ENCODE measurements at regions of chr4 and their contacts with region 1.

Region 1: DNA sequence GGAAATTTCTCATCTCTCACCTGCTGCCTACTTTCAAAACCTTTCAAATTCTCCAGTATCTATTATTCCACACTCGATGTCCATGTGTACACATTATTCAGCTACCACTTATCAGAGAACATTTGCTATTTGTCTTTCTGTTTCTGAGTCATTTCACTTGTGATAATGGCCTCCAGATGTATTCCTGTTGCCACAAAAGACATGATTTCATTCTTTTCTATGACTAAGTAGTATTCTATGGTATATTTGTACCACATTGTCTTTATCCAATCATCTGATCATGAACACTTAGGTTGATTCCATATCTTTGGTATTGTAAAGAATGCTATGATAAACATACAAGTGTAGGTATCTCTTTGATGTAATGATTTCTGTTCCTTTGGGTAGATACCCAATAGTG is 310.1 kb upstream of the SPOCK3 start:
- DNase-seq: no peak
- H3K4me3 ChIP-seq: no peak overlapping the region
- CTCF ChIP-seq: no peak
- POLR2A ChIP-seq: no peak

Region 2: GRCh38 chr4:167973513-167973912 is 429.1 kb after region 1 on chr4:
- intact Hi-C with region 1: loop called (anchors 5 kb)
- DNase-seq: no peak
- H3K4me3 ChIP-seq: no peak overlapping the region
- CTCF ChIP-seq: no peak
- POLR2A ChIP-seq: no peak

Measured in lower leg skin (tissue), 4 donors.